ENCODE measurements at regions of chr3 and their contacts with region 1.

Region 1: GRCh38 chr3:142993958-142994442 is 7.4 kb upstream of the U2SURP start:
- DNase-seq: peak; percentile 69 to 76
- H3K4me3 ChIP-seq: no peak overlapping the region
- H3K4me1 ChIP-seq: no peaks in the 10 kb centered on the region
- H3K27me3 ChIP-seq: no peaks in the 10 kb centered on the region

Region 2: DNA sequence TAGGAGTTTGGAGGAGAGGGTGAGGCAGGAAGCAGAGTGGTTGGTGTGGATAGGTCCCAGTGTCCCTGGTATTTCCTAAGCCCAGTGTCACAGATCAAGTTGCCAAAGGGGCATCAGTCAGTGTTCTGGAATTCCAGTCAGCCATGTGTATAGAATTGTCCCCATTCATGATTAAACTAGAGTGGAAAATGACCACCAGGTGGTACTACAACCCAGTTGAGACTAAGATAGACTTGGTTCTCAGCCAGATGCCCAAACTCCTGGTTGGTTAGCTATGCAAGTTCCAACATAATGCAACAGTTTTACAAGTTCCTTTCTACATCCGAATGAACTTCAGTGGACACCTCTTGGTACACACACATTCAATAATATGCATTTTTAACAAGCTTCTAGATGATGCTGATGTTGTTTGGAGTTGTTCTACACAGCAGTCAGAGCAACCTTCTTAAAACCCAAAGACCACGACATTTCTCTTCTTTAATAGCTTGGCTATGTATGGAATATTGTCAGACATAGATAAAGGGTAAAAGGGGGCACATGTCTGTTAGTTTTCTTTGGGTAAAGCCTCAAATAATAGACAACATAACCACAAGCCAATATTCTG is 407.1 kb before region 1 on chr3:
- in situ Hi-C with region 1: loop called (anchors 5 kb)
- DNase-seq: peak; percentile 65 to 75
- H3K4me3 ChIP-seq: no peak overlapping the region
- H3K4me1 ChIP-seq: no peaks in the 10 kb centered on the region
- H3K27me3 ChIP-seq: peaks cover 10% of the 10 kb centered on the region

Region 3: DNA sequence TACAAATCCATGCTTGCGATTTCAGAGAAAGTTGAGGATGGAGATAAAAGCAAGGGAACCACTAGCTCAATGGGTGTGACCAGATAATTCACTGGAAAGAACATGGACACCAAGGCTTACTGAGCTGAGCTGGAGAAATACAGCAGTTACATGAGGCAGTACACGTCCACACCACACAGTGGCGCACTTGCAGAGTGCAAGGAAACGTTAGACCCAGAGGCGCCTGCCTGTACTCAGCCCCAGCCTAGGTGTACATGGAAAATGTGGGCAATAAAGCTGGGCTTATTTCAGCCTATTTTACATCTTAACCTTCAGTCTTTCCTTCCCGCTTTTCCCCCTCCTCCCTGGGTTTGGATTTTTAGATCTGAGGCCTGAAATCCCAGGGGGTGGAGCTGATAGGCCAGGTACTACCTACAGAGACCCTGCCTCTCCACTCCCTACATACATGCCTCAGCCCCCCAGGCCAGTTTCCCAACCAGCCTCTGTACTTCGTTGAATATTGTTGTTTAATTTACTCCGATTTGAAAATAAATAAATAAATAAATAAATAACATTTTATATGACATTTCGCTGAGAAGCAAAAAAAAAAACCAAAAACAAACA is 165.2 kb before region 1 on chr3:
- in situ Hi-C with region 1: loop called (anchors 5 kb)
- DNase-seq: peak; percentile 72 to 89
- H3K4me3 ChIP-seq: no peak overlapping the region
- H3K4me1 ChIP-seq: peaks cover 4% of the 10 kb centered on the region
- H3K27me3 ChIP-seq: no peaks in the 10 kb centered on the region

Measured in HAP-1 (cell line).